GM12878 (cell line): ENCODE measurements at regions of chr9 and their contacts with region 1.

Region 1: GRCh38 chr9:882478-882877 is 41.0 kb downstream of the DMRT1 start:
- DNase-seq: no peak
- ATAC-seq: no peak
- H3K4me3 ChIP-seq: no peak overlapping the region
- H3K27ac ChIP-seq: no peak overlapping the region
- H3K4me1 ChIP-seq: no peaks in the 10 kb centered on the region
- H3K27me3 ChIP-seq: no peaks in the 10 kb centered on the region
- CTCF ChIP-seq: no peak
- EP300 ChIP-seq: no peak
- POLR2A ChIP-seq: no peak
- RAD21 ChIP-seq: no peak

Region 2: GRCh38 chr9:859251-859650 is 23.2 kb before region 1 on chr9:
- CTCF ChIA-PET with region 1: interaction called, 5 read pairs
- POLR2A ChIA-PET with region 1: interaction called, 3 read pairs
- RAD21 ChIA-PET with region 1: no interaction called
- SMC1A ChIA-PET with region 1: interaction called, 16 read pairs
- in situ Hi-C with region 1: no loop called
- intact Hi-C with region 1: loop called (anchors 1 kb)
- DNase-seq: peak; percentile 69
- ATAC-seq: peak; percentile 99
- H3K4me3 ChIP-seq: no peak overlapping the region
- H3K27ac ChIP-seq: no peak overlapping the region
- H3K4me1 ChIP-seq: peaks cover 7% of the 10 kb centered on the region; the same call in 1 of the 2 replicates
- H3K27me3 ChIP-seq: no peaks in the 10 kb centered on the region
- CTCF ChIP-seq: no peak; a peak in 1 of 6 replicates
- EP300 ChIP-seq: peak; percentile 81 to 86; a peak in 3 of 4 replicates
- POLR2A ChIP-seq: no peak
- RAD21 ChIP-seq: no peak

Region 3: DNA sequence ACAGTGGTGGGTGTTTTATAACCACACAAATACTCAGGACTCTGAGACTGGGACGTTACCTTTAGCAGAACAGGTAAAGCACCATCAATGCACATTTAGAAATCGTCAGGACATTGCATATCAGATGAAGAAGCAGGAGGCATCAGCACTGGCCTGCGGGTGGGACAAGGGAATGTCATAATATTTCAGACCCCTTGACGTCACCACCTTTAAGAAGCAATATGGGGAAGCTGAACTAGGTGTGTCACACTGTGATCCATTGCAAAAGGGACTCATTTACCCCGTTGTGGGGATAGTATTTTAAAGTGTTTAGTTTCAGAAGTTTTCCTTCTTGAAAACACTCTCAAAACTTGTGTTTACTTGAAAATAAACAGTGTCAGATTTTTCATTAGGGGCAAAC is 16.3 kb before region 1 on chr9:
- CTCF ChIA-PET with region 1: interaction called, 7 read pairs
- POLR2A ChIA-PET with region 1: interaction called, 3 read pairs
- RAD21 ChIA-PET with region 1: interaction called, 4 read pairs
- SMC1A ChIA-PET with region 1: interaction called, 13 read pairs
- in situ Hi-C with region 1: no loop called
- intact Hi-C with region 1: no loop called
- DNase-seq: no peak
- ATAC-seq: no peak
- H3K4me3 ChIP-seq: no peak overlapping the region
- H3K27ac ChIP-seq: no peak overlapping the region
- H3K4me1 ChIP-seq: no peaks in the 10 kb centered on the region
- H3K27me3 ChIP-seq: no peaks in the 10 kb centered on the region
- CTCF ChIP-seq: no peak
- EP300 ChIP-seq: no peak
- POLR2A ChIP-seq: no peak
- RAD21 ChIP-seq: no peak

Region 4: DNA sequence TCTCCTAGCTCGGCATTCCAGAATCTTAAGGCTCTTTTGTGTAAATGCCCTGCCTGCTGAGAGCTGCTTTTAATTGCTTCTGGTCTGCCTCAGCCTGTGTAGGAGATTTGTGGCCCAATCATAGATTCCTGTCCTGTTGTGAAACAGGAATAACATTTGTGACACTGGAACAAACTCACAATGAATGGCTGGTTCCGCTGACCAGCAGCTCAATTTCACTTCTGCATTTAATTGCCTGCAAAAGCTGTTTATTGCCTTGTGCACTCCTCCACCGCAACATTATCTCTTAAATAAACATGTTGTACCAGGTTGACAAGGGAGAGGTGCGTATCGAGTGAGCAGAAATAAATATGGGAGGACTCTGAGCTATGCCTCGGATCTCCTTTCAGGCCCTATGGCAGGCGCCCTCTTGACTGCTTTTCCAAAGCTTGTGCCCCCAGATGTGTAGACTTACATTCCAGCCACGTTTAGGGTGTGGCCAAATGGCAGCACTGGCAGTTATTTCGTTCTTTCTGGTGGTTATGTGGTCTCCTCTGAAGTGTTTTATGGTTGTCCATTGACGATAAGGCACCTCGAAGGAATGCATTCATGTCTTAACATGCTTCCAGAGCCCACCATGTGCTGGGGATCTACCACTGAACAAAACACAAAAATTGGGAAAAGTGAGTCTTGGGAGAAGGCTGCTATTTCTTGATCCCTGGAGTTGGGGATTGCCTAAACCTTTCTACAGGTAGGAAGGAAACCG is 17.1 kb after region 1 on chr9:
- CTCF ChIA-PET with region 1: interaction called, 8 read pairs
- POLR2A ChIA-PET with region 1: interaction called, 3 read pairs
- RAD21 ChIA-PET with region 1: interaction called, 11 read pairs
- SMC1A ChIA-PET with region 1: interaction called, 10 read pairs
- in situ Hi-C with region 1: no loop called
- intact Hi-C with region 1: no loop called
- DNase-seq: peak; percentile 36
- ATAC-seq: peak; percentile 74
- H3K4me3 ChIP-seq: no peak overlapping the region
- H3K27ac ChIP-seq: no peak overlapping the region
- H3K4me1 ChIP-seq: peaks cover 13% of the 10 kb centered on the region
- H3K27me3 ChIP-seq: no peaks in the 10 kb centered on the region
- CTCF ChIP-seq: no peak
- EP300 ChIP-seq: peak; percentile 50 to 84
- POLR2A ChIP-seq: no peak
- RAD21 ChIP-seq: no peak